PC-9 (cell line): ENCODE measurements at regions of chr19 and their contacts with region 1.

Region 1: DNA sequence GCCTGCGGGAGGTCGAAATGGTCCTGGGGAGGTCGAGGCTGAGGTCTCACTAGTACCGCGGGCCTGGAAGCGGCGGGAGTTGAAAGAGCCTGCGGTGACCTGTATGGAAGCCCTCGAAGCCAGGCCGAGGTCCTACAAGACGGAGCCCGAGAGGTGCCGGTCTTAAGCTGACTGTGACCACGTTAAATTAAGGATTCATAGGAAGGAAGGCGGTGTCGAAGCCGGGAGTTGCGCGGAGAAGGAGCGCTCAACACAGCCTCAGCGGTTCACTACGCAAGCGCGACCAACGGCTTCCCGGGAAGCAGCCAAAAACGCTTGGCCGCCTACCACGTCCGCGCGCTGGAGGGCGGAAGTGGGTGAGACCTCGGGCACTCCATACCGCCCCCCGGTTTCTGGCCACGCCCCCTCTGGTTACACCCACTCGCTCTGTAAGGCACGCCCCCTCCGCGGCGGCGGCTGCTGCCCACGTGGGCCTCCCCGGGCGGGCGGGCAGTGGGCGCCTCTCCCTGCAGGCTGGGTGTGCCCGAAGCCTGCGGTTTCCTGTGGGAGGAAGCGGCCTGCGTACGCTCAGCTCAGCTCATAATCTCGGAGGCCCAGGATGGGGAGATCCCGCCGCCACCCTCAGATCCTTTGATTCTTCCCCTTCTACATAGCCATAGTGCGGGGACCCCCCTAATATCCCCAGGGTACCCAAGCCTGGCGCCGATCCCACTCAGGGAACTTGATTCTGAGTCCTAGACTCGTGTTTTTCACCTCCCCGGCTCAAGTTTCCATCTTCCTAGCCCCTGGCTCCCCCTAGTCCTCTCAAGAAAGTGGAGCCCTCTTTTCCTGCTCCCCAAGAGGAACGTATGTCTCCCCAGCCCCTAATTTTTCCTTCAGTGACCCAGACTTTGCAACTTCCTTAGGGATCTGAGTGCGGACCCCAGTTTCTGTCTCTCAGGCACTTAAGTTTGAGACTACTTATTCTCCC is 3.4 kb upstream of the EMP3 start:
- DNase-seq: peak; percentile 91 to 100
- H3K4me3 ChIP-seq: peak overlapping the region; percentile 83
- H3K27ac ChIP-seq: peak overlapping the region; percentile 90
- H3K4me1 ChIP-seq: peaks cover 53% of the 10 kb centered on the region
- H3K27me3 ChIP-seq: no peaks in the 10 kb centered on the region
- CTCF ChIP-seq: 0 out of 2 replicates have a peak, but pooled peaks have one; percentile 32

Region 2: GRCh38 chr19:48194041-48194871 is 127.7 kb before region 1 on chr19:
- CTCF ChIA-PET with region 1: interaction called, 13 read pairs
- POLR2A ChIA-PET with region 1: no interaction called
- intact Hi-C with region 1: no loop called
- DNase-seq: no peak
- H3K4me3 ChIP-seq: no peak overlapping the region
- H3K27ac ChIP-seq: no peak overlapping the region
- H3K4me1 ChIP-seq: no peaks in the 10 kb centered on the region
- H3K27me3 ChIP-seq: no peaks in the 10 kb centered on the region
- CTCF ChIP-seq: peak; percentile 65

Region 3: DNA sequence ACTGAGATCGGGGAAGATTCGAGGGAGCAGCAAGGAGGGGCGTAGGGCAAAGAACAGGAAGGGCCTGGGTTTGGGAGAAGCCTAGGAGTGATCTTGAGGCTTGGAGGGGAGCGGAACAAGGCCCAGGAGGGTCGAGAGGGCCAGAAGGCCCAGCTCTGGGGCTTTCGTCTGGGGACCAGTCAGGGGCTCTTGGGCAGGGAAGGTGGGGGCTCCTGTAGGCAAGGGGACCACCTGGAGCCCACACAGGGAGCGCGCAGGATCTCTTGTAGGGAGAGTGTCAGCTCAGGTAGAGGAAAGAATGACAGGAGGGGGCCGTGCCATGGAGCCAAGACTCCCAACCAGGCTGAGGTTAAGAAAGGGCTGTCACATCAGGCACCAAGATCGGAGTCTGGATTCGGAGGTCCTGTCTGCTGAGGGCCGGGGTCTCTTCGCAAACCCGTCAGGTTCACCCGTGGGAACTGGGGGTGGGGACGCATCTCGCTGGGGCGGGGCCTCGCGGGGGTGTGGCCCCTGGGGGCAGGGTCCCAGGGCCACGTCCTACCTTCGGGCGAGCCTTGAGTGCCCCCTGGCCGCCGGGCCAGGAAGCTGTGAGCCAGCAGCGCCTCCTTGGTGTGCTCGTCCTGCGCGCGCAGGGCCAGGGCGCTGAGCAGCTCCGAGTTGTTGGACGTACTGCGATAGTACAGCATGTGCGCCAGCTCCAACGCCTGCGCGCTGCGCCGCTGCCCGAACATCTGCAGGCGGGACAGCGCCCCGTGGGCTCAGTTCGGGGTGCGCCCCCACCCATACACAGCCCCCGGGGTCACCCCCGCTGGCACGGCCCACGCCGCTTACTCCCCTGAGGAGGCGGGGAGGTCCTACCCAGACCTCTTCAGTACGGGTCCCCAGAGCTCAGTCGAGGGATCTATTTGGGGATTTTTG is 11.8 kb after region 1 on chr19:
- CTCF ChIA-PET with region 1: interaction called, 20 read pairs
- POLR2A ChIA-PET with region 1: interaction called, 56 read pairs
- intact Hi-C with region 1: loop called (anchors 1 kb)
- DNase-seq: peak; percentile 87 to 91
- H3K4me3 ChIP-seq: peak overlapping the region; percentile 55
- H3K27ac ChIP-seq: peak overlapping the region; percentile 68
- H3K4me1 ChIP-seq: peaks cover 16% of the 10 kb centered on the region
- H3K27me3 ChIP-seq: no peaks in the 10 kb centered on the region
- CTCF ChIP-seq: peak; percentile 87

Region 4: DNA sequence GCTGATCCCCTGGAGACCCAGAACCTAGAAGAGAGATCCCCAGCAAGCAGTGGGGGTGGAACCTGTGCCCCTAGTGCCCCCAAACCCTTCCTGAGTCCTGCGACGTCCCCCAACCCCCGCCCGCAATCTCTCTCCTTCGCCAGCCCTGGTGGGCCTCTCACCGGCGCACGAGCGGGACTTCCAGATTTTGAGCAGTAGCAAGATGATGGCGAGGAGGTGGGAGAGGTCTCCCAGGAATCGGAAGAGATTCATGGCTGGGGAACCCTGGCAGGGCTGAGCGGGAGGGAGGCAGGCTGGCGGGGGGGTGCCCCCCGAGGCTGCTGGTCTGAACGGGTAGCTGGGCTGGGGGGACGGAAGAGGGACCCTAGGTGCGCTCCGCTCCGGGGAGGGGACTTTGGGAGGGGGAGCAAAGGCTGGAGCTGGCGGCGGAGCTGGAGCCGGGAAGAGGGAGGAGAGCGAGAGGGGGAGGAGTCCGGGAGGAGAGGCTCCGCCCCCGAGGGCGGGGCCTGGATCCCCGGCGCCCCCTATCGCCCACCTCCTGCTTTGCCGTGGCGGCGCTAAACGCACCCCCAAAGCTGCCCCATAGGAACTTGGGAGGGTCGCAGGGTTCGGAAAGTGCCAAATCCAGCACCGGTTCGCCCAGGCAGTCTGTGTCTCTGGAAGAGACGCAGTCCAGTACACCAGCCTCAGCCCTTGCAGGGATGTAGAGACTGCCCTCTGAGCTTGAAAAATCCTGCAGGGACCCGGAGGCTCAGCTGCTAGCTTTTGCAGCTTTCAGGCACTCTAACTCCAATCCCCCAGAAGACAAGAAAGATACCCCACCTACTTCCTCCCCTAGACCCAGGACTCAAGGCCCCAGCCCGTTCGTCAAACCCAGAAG is 69.4 kb after region 1 on chr19 and contains the start of gene KDELR1:
- CTCF ChIA-PET with region 1: no interaction called
- POLR2A ChIA-PET with region 1: interaction called, 3 read pairs
- intact Hi-C with region 1: loop called (anchors 2 kb)
- DNase-seq: peak in 1 of 2 experiments; percentile 82
- H3K4me3 ChIP-seq: peak within 1 kb of the TSS; percentile 91
- H3K27ac ChIP-seq: peak within 1 kb of the TSS; percentile 58
- H3K4me1 ChIP-seq: no peaks in the 10 kb centered on the region
- H3K27me3 ChIP-seq: peaks cover 11% of the 10 kb centered on the region
- CTCF ChIP-seq: peak; percentile 95
- total RNA-seq, gene KDELR1: 220 and 261 TPM in 2 replicates

Region 5: DNA sequence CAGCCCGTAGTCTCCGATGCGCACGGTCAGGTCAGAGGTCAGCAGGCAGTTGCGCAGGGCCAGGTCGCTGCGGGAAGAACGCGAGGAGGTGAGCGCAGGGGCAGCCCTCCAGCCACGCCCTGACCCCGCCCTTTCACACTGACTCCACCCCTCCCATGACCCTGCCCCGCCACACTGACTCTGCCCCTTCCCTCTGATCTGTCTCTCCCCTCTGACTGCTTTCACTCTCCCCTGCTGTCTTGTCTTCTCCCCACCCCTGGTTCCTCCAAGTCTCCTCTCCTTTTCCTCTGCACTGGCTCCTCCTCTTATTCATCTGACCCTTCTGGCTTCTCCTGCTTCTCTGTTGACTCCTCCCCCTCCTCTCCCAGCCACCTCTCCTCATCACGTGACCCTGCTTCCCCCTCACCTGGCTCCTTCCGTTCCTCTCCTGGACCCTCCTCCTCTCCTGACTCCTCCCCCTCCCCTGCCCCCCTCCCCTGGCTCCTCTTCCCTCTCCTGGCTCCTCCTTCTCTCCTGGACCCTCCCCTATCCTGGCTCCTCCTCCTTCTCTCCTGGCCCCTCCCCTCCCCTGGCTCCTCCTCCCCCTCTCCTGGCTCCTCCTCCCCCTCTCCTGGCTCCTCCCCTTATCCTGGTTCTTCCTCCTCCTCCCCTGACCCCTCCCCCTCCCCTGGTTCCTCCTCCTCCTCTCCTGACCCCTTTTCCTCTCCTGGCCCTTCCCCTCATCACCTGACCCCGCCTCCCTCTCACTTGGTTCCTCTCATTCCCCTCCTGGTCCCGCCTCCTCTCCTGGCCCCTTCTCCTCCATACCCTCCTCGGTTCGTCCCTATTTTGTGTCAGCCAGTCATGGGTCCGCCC is 179.8 kb after region 1 on chr19:
- CTCF ChIA-PET with region 1: interaction called, 10 read pairs
- POLR2A ChIA-PET with region 1: interaction called, 16 read pairs
- intact Hi-C with region 1: loop called (anchors 5 kb)
- DNase-seq: peak; percentile 96 to 99
- H3K4me3 ChIP-seq: peak overlapping the region; percentile 95
- H3K27ac ChIP-seq: peak overlapping the region; percentile 65
- H3K4me1 ChIP-seq: peaks cover 16% of the 10 kb centered on the region; the same call in 1 of the 2 replicates
- H3K27me3 ChIP-seq: no peaks in the 10 kb centered on the region
- CTCF ChIP-seq: no peak

Region 6: GRCh38 chr19:48618916-48619691 is 297.2 kb after region 1 on chr19 and contains the starts of genes RPL18 and SPHK2:
- CTCF ChIA-PET with region 1: no interaction called
- POLR2A ChIA-PET with region 1: interaction called, 13 read pairs
- intact Hi-C with region 1: no loop called
- DNase-seq: peak; percentile 97 to 99
- H3K4me3 ChIP-seq: peak within 1 kb of the TSS; percentile 92
- H3K27ac ChIP-seq: peak within 1 kb of the TSS; percentile 91
- H3K4me1 ChIP-seq: peaks cover 42% of the 10 kb centered on the region
- H3K27me3 ChIP-seq: no peaks in the 10 kb centered on the region
- CTCF ChIP-seq: no peak
- total RNA-seq, gene RPL18: 1,618 and 1,710 TPM in 2 replicates
- total RNA-seq, gene SPHK2: 18.4 and 20.0 TPM in 2 replicates